Posterior cingulate gyrus (tissue), 11 donors: ENCODE measurements at regions of chr2 and their contacts with region 1.

Region 1: GRCh38 chr2:96208143-96209010 is at the start of gene STARD7:
- DNase-seq: peak; percentile 95 to 100 (median 98)

Region 2: DNA sequence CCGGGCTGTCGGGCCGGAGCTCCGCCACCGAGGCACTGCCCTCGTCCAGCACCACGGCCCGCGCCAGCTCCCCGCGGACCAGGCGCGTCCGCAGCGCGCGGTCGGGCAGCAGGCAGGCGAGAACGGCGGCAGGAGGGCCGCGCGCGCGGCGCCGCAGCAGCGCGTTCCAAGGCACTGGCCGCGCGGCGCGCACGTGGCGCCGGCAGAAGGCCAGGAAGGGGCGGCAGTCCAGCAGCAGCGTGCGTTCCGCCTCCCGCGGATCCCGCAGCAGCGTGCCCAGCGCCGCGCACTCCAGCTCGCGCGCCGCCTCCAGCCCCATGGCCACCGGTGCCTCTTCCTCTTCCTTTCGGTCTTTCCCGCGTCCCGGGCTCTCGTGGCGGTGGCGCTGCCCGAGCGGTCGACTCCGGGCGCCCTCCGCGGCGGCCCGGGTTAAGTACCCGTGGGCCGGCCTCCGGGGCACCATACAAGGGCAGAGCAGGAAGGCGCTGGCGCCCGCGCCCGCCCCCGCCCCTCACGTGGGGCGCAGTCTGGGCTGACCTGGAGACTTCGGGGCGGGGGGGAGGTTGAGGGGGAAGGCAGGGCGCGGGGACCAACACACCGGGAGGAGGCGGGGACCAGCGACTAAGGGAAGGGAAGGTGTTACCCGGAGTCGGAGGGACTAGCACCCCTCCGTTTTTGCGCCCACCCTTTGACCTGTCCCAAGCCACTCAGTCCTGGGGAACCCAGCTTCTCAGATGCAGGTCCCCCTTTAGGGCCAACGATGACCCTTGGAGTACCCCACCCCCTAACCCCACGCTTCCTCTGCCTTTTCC is 63.1 kb before region 1 on chr2 and contains the start of gene DUSP2:
- intact Hi-C with region 1: loop called (anchors 5 kb)
- DNase-seq: peak; percentile 35 to 95 (median 58)

Region 3: DNA sequence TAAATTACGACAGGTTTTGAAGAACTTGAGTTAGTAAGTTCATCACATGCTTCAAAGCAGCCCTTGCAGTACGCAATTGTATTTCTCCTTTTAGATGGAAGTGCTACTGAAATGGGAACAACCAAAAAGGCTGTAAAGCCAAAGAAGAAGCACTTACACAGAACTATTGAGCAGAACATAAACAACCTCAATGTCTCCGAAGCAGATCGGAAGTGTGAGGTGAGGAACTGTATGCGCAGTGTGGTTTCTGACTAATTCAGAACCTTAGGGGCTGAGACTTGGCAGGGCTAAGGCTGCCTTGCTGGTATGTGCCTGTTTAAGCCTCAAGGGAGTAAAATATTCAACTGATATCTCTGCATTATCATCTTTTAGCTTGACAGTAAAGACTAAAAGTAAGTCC is 135.6 kb after region 1 on chr2:
- intact Hi-C with region 1: no loop called
- DNase-seq: no peak